HepG2 (cell line): ENCODE measurements at regions of chr13 and their contacts with region 1.

Region 1: DNA sequence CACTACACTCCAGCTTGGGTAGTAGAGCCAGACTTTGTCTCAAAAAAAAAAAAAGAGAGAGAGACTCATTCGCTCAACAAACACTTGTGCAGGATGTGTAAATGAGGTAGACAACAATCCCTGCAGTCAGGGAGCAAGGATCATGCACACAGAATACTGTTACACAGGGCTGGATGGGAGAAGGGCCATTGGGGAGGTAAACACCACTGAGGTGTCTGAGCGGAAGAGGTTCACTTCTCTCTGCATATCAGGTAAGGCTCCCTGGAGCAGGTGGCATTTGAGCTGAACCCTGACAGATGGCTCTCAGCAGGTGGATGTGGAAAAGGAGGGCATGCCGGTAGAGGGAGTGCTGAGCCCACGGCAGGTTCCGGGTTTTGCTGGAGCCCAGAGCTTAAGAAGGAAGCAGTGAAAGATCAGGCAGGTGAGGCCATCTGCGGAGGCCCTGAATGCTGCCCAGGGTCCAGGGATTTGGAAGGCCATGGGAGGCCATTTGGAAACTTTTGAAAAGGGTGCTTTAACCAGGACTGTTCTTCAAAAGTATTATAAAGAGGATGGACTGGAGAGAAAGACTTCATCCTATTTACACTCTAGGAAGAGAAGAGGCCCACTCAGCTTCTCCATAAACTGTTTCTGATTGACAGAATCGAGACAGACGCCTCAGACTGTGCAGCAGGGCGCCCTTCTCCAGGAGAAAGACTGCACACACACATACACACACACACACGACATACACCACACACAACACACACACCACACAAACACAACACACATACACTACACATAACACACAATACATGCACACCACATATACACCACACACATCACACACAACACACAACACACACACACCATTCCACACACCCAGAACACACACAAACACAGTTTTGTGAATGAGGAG is 199.4 kb downstream of the USP12 start:
- DNase-seq: peak; percentile 74
- ATAC-seq: peak; percentile 60
- H3K4me3 ChIP-seq: peak overlapping the region in 1 of 3 experiments; percentile 16; a peak in 1 of 6 replicates
- H3K27ac ChIP-seq: peak overlapping the region; percentile 48
- H3K4me1 ChIP-seq: peaks cover 97% of the 10 kb centered on the region
- H3K27me3 ChIP-seq: no peaks in the 10 kb centered on the region
- CTCF ChIP-seq: peak; percentile 82
- EP300 ChIP-seq: no peak
- POLR2A ChIP-seq: no peak
- RAD21 ChIP-seq: peak; percentile 55

Region 2: DNA sequence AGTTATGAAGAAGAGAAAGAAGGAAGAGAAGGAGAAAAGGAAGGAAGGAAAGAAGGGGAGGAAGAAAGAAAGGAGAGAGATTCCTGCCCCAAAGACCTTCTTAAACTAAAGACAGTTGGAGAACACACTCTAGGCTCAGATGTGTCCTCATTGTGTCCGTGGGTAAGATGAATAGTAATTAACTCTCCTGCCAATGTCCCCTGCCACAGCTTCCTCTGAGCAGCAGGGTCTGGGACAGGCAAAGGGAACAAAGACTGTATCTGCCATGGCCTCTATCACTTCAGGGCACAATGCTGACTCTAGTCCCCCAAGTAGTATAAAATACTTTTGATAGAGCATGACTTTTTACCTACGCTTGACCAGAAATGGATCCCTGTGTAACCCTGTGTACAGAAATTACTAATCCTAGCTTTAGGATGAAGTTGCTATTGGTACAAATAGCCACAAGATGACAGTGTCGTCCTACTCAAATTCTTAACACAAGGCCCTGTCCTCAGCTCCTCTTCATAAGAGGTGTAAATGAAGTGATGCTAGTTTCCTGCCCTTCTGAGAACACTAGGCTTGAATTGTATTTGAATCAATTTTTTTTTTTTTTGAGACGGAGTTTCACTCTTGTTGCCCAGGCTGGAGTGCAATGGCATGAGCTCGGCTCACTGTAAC is 25.4 kb before region 1 on chr13:
- CTCF ChIA-PET with region 1: no interaction called
- POLR2A ChIA-PET with region 1: interaction called, 4 read pairs
- in situ Hi-C with region 1: no loop called
- intact Hi-C with region 1: loop called (anchors 2 kb)
- DNase-seq: peak; percentile 64
- ATAC-seq: peak; percentile 80
- H3K4me3 ChIP-seq: no peak overlapping the region
- H3K27ac ChIP-seq: no peak overlapping the region
- H3K4me1 ChIP-seq: peaks cover 37% of the 10 kb centered on the region
- H3K27me3 ChIP-seq: no peaks in the 10 kb centered on the region
- CTCF ChIP-seq: peak; percentile 90
- EP300 ChIP-seq: no peak
- POLR2A ChIP-seq: no peak
- RAD21 ChIP-seq: peak; percentile 87

Region 3: DNA sequence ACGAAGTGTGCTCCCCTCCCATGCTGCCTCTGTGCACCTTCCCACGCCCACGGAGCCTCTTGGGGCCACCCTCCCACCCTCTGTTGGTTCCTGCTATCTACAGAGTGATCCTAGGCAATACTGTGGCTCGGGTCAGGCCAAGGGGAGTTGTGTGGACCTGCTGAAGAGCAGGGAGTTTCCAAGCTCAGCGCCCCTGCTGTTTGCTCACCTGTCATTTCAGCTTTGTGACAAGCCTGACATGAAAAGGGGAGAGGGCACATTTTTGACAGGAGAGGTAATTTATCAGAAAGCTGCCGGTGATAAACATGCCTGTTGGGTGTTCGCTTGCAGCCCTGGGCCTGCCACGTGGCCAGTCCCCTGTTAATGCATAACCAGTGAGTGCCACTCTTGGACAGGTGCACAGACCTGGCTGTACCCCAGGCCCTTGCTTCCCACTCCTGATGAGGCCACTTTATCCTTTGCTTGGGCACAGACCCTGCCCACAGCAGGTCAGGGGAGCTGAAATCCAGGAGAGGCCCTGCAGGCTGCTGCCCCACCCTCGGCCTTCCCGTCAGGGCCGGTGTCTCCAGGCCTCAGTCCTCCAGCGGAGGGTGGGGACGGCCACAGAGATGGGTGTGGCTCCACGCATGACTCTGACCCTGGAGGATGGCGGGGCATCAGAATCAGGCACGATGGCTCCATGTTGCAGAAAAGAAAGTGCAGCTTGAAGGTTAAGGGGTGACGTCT is 10.2 kb before region 1 on chr13:
- CTCF ChIA-PET with region 1: no interaction called
- POLR2A ChIA-PET with region 1: no interaction called
- in situ Hi-C with region 1: no loop called
- intact Hi-C with region 1: no loop called
- DNase-seq: peak; percentile 92
- ATAC-seq: peak; percentile 88
- H3K4me3 ChIP-seq: peak overlapping the region in 1 of 3 experiments; percentile 21; a peak in 1 of 6 replicates
- H3K27ac ChIP-seq: peak overlapping the region; percentile 66
- H3K4me1 ChIP-seq: peaks cover 92% of the 10 kb centered on the region
- H3K27me3 ChIP-seq: no peaks in the 10 kb centered on the region
- CTCF ChIP-seq: peak; percentile 52
- EP300 ChIP-seq: peak in 1 of 2 experiments; percentile 71; a peak in 2 of 4 replicates
- POLR2A ChIP-seq: no peak
- RAD21 ChIP-seq: no peak

Region 4: DNA sequence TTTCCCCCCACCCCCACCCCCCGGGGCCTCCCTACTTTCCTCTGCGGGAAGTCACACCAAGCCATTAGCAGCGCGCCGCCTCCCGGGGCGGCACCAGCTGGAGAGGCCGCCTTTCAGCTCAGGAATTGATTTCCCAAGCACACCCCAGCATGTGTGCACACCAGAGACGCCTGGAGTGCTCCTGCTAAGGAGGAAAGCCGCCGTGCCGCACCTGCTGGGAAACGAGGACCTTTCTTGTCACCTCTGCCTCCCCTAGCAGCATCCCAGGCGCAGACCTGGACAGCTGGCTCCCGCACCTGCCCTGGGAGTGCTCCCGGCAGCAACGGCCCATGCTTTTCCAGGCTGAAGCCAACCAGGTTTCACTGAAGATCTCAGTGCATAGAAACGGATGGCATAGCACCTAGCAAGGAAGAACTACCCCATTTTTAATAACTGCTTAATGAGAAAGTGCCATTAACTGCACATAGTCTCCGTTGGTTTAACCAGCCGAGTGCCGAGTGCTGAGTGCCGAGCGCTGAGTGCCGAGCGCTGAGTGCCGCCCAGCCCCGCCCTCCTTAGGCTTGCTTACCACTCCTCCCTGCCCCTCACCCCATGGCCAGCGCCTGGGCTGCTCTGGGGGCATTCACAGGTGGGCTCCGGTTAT is 34.4 kb after region 1 on chr13:
- CTCF ChIA-PET with region 1: no interaction called
- POLR2A ChIA-PET with region 1: no interaction called
- in situ Hi-C with region 1: no loop called
- intact Hi-C with region 1: no loop called
- DNase-seq: no peak
- ATAC-seq: peak; percentile 85
- H3K4me3 ChIP-seq: peak overlapping the region; percentile 14 to 68 (median 36)
- H3K27ac ChIP-seq: no peak overlapping the region
- H3K4me1 ChIP-seq: peaks cover 26% of the 10 kb centered on the region
- H3K27me3 ChIP-seq: peaks cover 3 to 50% of the 10 kb centered on the region in 2 experiments; a peak in 4 of 5 replicates
- CTCF ChIP-seq: no peak
- EP300 ChIP-seq: no peak
- POLR2A ChIP-seq: no peak
- RAD21 ChIP-seq: no peak

Region 5: GRCh38 chr13:27953676-27954405 is 981.6 kb after region 1 on chr13:
- CTCF ChIA-PET with region 1: no interaction called
- POLR2A ChIA-PET with region 1: no interaction called
- in situ Hi-C with region 1: loop called (anchors 25 kb)
- intact Hi-C with region 1: no loop called
- DNase-seq: peak; percentile 19
- ATAC-seq: peak; percentile 96
- H3K4me3 ChIP-seq: peak overlapping the region; percentile 45 to 68 (median 53); a peak in 5 of 6 replicates
- H3K27ac ChIP-seq: no peak overlapping the region
- H3K4me1 ChIP-seq: peaks cover 26% of the 10 kb centered on the region
- H3K27me3 ChIP-seq: peaks cover 0 to 4% of the 10 kb centered on the region in 2 experiments; a peak in 1 of 5 replicates
- CTCF ChIP-seq: peak; percentile 74
- EP300 ChIP-seq: no peak
- POLR2A ChIP-seq: no peak
- RAD21 ChIP-seq: peak; percentile 84